Activated naive CD4-positive, alpha-beta T cell treated with anti-CD3 and anti-CD28 coated beads for 36 hours (primary cell): ENCODE measurements at regions of chr13 and their contacts with region 1.

Region 1: GRCh38 chr13:99051768-99052455 is 74.0 kb upstream of the DOCK9 start:
- DNase-seq: no peak
- H3K4me3 Mint-ChIP-seq: peak overlapping the region; percentile 33
- H3K27ac Mint-ChIP-seq: peak overlapping the region; percentile 77
- H3K4me1 Mint-ChIP-seq: peaks cover 80% of the 10 kb centered on the region
- H3K27me3 Mint-ChIP-seq: no peaks in the 10 kb centered on the region

Region 2: DNA sequence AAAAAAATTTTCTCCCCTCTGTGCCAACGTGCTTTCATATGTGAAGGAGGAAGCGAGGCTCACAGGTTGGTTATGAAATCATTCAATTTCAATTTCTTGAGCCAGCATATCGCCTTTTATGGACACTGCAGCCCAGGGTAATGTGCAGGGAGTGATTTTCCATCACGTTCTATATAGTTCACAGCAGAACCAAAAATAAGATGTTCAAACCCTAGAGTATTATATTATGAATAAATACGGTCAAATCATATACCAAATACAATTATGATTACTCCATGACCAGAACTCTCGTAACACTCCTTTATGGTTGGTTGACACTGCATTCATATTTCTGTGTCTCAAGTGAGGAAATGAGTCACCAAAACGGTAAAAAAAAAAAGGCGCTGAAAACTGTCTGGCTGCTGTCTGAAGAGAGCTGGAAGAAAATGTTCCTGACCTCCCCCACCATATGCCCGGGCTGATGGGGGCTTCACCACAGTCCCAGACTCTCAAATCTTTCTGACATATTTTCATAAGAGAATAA is 72.9 kb after region 1 on chr13:
- CTCF ChIA-PET with region 1: no interaction called
- intact Hi-C with region 1: loop called (anchors 2 kb)
- DNase-seq: peak; percentile 23
- H3K4me3 Mint-ChIP-seq: peak overlapping the region; percentile 35
- H3K27ac Mint-ChIP-seq: no peak overlapping the region
- H3K4me1 Mint-ChIP-seq: peaks cover 42% of the 10 kb centered on the region
- H3K27me3 Mint-ChIP-seq: no peaks in the 10 kb centered on the region